Lower leg skin (tissue), 4 donors: ENCODE measurements at regions of chr2 and their contacts with region 1.

Region 1: GRCh38 chr2:168246483-168247340 is 683 bp downstream of the STK39 start:
- DNase-seq: peak; percentile 23 to 89
- H3K4me3 ChIP-seq: peak overlapping the region; percentile 49
- CTCF ChIP-seq: no peak
- POLR2A ChIP-seq: no peak

Region 2: DNA sequence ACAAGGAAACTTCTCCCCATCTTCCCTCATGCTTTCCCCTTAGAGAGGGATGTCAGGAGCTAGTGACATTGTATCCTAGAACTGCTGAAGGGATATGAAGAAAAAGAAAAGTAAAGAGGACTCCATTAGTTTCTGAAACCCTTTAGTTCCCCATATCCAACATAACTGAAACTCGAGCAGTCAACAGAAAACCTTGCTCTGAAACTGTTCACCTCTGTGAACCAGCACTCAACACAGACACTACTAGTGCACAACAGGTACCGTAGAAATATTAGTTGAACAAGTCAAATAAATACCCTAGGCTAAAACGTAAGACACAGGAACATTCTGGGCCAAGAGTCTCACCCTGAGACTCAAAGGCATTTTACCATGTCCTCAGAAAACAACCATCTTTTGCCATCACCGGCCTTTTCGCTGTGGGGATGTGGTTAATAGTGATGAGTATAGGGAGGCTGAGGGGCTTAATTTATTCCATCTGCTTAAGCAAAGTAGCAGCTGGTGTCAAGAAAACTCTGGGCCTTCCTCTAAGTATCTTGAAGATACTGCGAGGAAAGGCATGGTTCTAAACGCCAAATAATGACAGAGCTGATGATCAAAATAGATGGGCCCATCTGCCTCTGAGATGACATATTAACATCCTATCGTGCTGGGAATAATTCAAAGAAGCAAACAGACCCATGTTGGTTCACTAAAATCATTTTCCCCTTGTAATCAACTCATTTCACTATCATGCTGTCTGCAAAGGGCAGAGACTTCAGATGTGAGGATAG is 156.2 kb before region 1 on chr2:
- intact Hi-C with region 1: no loop called
- DNase-seq: no peak
- H3K4me3 ChIP-seq: no peak overlapping the region
- CTCF ChIP-seq: no peak
- POLR2A ChIP-seq: no peak

Region 3: GRCh38 chr2:169159686-169160085 is 913.0 kb after region 1 on chr2:
- intact Hi-C with region 1: loop called (anchors 10 kb)
- DNase-seq: no peak
- H3K4me3 ChIP-seq: no peak overlapping the region
- CTCF ChIP-seq: no peak
- POLR2A ChIP-seq: no peak